ENCODE measurements at regions of chr22 and their contacts with region 1.

Region 1: DNA sequence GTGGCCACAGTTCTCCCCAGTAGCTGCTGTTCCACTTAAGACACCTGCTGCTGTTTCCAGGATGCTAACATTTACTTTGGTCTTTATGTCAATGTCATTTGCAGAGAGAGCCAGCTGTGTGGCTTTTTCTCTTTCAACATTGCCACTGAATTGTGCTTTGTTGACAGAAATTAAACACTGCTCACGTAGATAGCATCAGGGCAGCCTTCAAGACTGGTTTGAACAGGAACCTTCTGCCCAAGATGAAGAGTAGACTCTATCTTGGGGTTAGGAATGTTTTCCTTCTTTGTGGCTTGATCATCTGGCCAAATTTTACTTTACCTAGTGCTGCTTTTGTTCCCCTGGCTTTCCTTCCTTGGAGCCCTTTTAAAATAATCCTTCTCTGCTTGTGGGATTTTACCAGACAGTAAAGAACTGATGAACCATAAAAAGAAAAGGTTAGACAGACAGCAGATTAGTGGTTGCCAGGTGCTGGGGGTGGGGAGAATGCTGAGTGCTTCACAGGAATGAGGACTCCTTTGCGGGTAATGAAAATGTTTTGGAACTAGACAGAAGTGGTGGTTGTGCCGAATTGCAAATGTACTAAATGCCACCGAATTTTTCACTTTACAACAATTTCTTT is 22.7 kb upstream of the XBP1 start:
- DNase-seq: no peak
- ATAC-seq: no peak
- H3K4me3 ChIP-seq: no peak overlapping the region
- H3K27ac ChIP-seq: no peak overlapping the region
- H3K4me1 ChIP-seq: peaks cover 19% of the 10 kb centered on the region
- H3K27me3 ChIP-seq: no peaks in the 10 kb centered on the region
- CTCF ChIP-seq: no peak

Region 2: GRCh38 chr22:28783786-28784671 is 39.0 kb before region 1 on chr22:
- CTCF ChIA-PET with region 1: no interaction called
- POLR2A ChIA-PET with region 1: interaction called, 5 read pairs
- intact Hi-C with region 1: loop called (anchors 5 kb)
- DNase-seq: peak; percentile 38
- ATAC-seq: peak; percentile 96
- H3K4me3 ChIP-seq: no peak overlapping the region
- H3K27ac ChIP-seq: peak overlapping the region; percentile 58
- H3K4me1 ChIP-seq: peaks cover 8% of the 10 kb centered on the region; the same call in 1 of the 2 replicates
- H3K27me3 ChIP-seq: no peaks in the 10 kb centered on the region
- CTCF ChIP-seq: no peak

Measured in PC-3 (cell line).